CD4-positive, alpha-beta T cell (primary cell): ENCODE measurements at regions of chr4 and their contacts with region 1.

Region 1: GRCh38 chr4:38319456-38320342 is 344.3 kb upstream of the KLF3 start:
- DNase-seq: peak; percentile 79 to 98 (median 92)
- ATAC-seq: peak; percentile 88
- H3K4me3 ChIP-seq: peak overlapping the region; percentile 43
- H3K4me3 Mint-ChIP-seq: peak overlapping the region; percentile 88
- H3K27ac ChIP-seq: peak overlapping the region; percentile 59 to 60
- H3K27ac Mint-ChIP-seq: peak overlapping the region; percentile 86
- H3K4me1 ChIP-seq: peaks cover 31% of the 10 kb centered on the region
- H3K4me1 Mint-ChIP-seq: peaks cover 68% of the 10 kb centered on the region
- H3K27me3 ChIP-seq: no peaks in the 10 kb centered on the region
- H3K27me3 Mint-ChIP-seq: no peaks in the 10 kb centered on the region
- CTCF ChIP-seq: peak; percentile 99

Region 2: DNA sequence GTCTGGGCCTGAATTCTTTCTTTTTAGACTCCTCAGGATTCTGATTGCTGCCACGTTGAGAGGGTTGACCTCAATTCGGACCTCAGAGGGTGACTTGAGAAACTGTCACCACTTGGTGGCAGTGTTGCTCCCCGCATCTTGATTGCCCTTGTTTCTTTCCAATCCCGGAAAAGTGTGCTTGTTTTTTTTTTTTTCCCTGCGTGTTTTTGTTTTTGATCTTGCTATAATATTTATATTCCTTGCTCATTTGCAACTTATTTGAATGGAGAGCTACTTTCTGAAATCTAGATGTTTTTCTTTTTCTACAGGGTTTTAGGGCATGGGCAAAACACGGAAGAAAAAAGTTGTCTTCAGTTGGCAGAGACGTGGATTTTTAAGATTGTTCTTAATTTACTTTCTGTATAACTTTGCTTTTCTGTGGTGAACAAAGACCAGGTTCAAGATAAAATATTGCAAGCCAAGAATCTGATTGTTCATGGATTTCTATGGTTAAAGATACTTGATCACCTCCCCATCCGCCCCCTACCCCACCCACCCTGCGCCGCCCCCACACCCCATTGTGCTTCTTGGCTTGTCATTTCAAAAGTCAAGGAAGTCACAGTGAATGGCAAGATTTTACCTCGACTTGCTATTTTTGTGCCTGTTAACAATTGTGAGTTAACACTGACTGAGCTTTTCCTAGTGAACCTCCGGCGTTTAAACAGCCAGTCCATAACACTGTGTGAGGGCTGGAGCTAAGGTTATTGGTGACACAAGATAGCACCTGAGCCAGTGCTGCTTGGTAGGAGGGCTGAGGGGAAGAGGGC is 257.4 kb before region 1 on chr4:
- CTCF ChIA-PET with region 1: no interaction called
- POLR2A ChIA-PET with region 1: no interaction called
- intact Hi-C with region 1: loop called (anchors 5 to 10 kb)
- DNase-seq: peak; percentile 32 to 82 (median 54)
- ATAC-seq: peak; percentile 73
- H3K4me3 ChIP-seq: peak overlapping the region; percentile 44
- H3K4me3 Mint-ChIP-seq: peak overlapping the region; percentile 91
- H3K27ac ChIP-seq: no peak overlapping the region
- H3K27ac Mint-ChIP-seq: no peak overlapping the region
- H3K4me1 ChIP-seq: peaks cover 7% of the 10 kb centered on the region
- H3K4me1 Mint-ChIP-seq: peaks cover 15% of the 10 kb centered on the region
- H3K27me3 ChIP-seq: no peaks in the 10 kb centered on the region
- H3K27me3 Mint-ChIP-seq: no peaks in the 10 kb centered on the region
- CTCF ChIP-seq: peak; percentile 95

Region 3: GRCh38 chr4:38514465-38515146 is 194.9 kb after region 1 on chr4:
- CTCF ChIA-PET with region 1: interaction called, 5 read pairs
- POLR2A ChIA-PET with region 1: interaction called, 5 read pairs
- intact Hi-C with region 1: loop called (anchors 5 kb)
- DNase-seq: peak in 2 of 14 experiments; percentile 28 to 32
- ATAC-seq: peak; percentile 56
- H3K4me3 ChIP-seq: peak overlapping the region; percentile 3
- H3K4me3 Mint-ChIP-seq: peak overlapping the region; percentile 72
- H3K27ac ChIP-seq: no peak overlapping the region
- H3K27ac Mint-ChIP-seq: peak overlapping the region; percentile 68
- H3K4me1 ChIP-seq: peaks cover 55% of the 10 kb centered on the region
- H3K4me1 Mint-ChIP-seq: peaks cover 85% of the 10 kb centered on the region
- H3K27me3 ChIP-seq: no peaks in the 10 kb centered on the region
- H3K27me3 Mint-ChIP-seq: no peaks in the 10 kb centered on the region
- CTCF ChIP-seq: no peak

Region 4: GRCh38 chr4:38654273-38654672 is 334.6 kb after region 1 on chr4:
- CTCF ChIA-PET with region 1: interaction called, 7 read pairs
- POLR2A ChIA-PET with region 1: interaction called, 19 read pairs
- intact Hi-C with region 1: no loop called
- DNase-seq: peak in 11 of 14 experiments; percentile 32 to 91 (median 48)
- ATAC-seq: peak; percentile 68
- H3K4me3 ChIP-seq: peak overlapping the region; percentile 36
- H3K4me3 Mint-ChIP-seq: peak overlapping the region; percentile 85
- H3K27ac ChIP-seq: peak overlapping the region; percentile 80 to 92
- H3K27ac Mint-ChIP-seq: peak overlapping the region; percentile 98
- H3K4me1 ChIP-seq: peaks cover 35% of the 10 kb centered on the region
- H3K4me1 Mint-ChIP-seq: peaks cover 55% of the 10 kb centered on the region
- H3K27me3 ChIP-seq: no peaks in the 10 kb centered on the region
- H3K27me3 Mint-ChIP-seq: no peaks in the 10 kb centered on the region
- CTCF ChIP-seq: no peak

Region 5: GRCh38 chr4:38675146-38676121 is 355.7 kb after region 1 on chr4:
- CTCF ChIA-PET with region 1: interaction called, 36 read pairs
- POLR2A ChIA-PET with region 1: interaction called, 34 read pairs
- intact Hi-C with region 1: loop called (anchors 1 to 2 kb)
- DNase-seq: peak; percentile 66 to 93 (median 80)
- ATAC-seq: peak; percentile 57
- H3K4me3 ChIP-seq: no peak overlapping the region
- H3K4me3 Mint-ChIP-seq: peak overlapping the region; percentile 85
- H3K27ac ChIP-seq: peak overlapping the region in 1 of 2 donors; percentile 51
- H3K27ac Mint-ChIP-seq: peak overlapping the region; percentile 81
- H3K4me1 ChIP-seq: peaks cover 72% of the 10 kb centered on the region
- H3K4me1 Mint-ChIP-seq: peaks cover 89% of the 10 kb centered on the region
- H3K27me3 ChIP-seq: no peaks in the 10 kb centered on the region
- H3K27me3 Mint-ChIP-seq: no peaks in the 10 kb centered on the region
- CTCF ChIP-seq: peak; percentile 96

Region 6: GRCh38 chr4:39154009-39154408 is 834.3 kb after region 1 on chr4:
- CTCF ChIA-PET with region 1: no interaction called
- POLR2A ChIA-PET with region 1: no interaction called
- intact Hi-C with region 1: no loop called
- DNase-seq: no peak
- ATAC-seq: no peak
- H3K4me3 ChIP-seq: no peak overlapping the region
- H3K4me3 Mint-ChIP-seq: no peak overlapping the region
- H3K27ac ChIP-seq: no peak overlapping the region
- H3K27ac Mint-ChIP-seq: no peak overlapping the region
- H3K4me1 ChIP-seq: no peaks in the 10 kb centered on the region
- H3K4me1 Mint-ChIP-seq: no peaks in the 10 kb centered on the region
- H3K27me3 ChIP-seq: no peaks in the 10 kb centered on the region
- H3K27me3 Mint-ChIP-seq: no peaks in the 10 kb centered on the region
- CTCF ChIP-seq: no peak